Posterior vena cava (tissue), 2 donors: ENCODE measurements at regions of chr2 and their contacts with region 1.

Region 1: DNA sequence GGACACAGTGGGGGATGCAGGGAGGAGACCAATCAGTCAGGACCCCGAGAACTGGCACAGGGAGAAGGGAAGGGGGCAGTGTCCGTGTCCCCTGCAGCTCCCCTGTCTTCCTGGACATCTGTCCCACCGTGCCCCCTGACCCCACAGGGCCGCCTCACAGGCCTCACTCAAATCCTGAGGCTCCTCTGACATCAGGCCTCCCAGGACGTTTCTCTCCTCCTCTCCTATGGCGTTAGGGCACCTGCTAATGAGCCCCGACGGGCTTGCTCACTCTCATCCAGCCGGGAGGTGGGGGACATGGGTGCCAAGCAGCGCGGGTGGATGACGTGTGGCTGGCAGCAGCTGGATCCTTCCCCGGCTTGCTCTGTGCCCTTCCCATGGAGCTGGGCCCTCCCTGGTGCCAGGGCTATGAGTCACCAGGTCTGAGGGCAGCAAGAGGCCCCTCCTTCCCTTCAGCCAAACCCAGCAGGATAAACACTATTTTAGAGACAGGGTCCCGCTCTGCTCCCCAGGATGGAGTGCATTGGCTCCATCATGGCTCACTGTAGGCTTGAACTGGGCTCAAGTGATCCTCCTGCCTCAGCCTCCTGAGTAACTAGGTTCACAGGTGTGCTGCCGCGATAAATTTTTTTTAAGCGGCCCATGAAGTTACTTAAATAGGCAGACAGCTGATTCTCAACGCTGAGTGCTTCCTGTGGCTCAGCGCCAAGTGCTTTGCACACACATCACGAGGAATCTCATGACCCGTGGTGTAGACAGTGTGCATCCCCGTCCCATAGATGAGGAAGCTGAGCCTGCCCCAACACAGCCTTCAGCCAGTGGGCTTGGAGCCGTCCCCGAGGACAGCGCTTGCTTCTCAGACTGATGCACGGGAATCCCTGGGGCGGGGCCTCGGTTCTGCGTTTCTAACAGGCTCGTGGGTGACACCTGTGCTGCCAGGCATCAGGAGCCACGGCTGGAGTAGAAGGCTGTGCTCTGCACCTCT is 64.5 kb upstream of the HDAC4 start:
- DNase-seq: peak; percentile 94

Region 2: GRCh38 chr2:239264838-239265651 is 200.3 kb before region 1 on chr2:
- intact Hi-C with region 1: loop called in 1 of 2 experiments (anchors 1 kb)
- DNase-seq: peak; percentile 86